Activated CD4-positive, alpha-beta memory T cell treated with anti-CD3 and anti-CD28 coated beads for 36 hours (primary cell): ENCODE measurements at regions of chr6 and their contacts with region 1.

Region 1: DNA sequence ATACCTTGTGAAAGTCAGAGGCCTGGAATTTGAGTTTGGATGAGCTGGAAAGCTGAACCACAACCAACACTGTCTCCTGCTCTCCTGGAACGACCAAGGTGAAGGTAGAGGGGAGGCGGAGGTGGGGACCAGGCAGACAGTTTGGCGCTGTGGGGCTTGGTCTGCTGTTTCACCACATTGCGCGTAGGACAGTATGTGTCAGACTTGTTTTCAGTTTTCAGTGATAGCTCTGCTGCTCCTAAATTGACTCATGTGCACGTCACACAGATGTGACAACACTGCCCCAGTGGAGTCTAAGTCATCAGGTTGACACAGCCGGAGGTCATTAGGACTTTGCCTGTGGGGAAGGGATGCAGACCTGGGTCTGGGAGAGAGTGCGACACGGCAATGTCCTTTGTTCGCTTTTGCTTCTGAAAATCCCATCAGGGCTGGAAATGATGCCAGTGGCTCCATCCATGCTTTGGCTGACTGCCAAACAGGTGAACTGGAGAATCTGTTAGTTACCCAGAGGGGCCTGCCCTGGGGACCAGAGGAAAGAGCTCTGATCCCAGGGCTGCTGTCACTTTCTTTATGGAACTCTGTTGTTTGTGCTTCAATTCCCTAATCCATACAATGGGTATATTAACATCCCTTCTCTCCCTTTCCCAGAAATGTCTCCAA is 255.5 kb downstream of the CDC5L start:
- DNase-seq: peak; percentile 88
- H3K4me3 Mint-ChIP-seq: peak overlapping the region; percentile 33
- H3K27ac Mint-ChIP-seq: peak overlapping the region; percentile 96
- H3K4me1 Mint-ChIP-seq: peaks cover 39% of the 10 kb centered on the region
- H3K27me3 Mint-ChIP-seq: no peaks in the 10 kb centered on the region

Region 2: DNA sequence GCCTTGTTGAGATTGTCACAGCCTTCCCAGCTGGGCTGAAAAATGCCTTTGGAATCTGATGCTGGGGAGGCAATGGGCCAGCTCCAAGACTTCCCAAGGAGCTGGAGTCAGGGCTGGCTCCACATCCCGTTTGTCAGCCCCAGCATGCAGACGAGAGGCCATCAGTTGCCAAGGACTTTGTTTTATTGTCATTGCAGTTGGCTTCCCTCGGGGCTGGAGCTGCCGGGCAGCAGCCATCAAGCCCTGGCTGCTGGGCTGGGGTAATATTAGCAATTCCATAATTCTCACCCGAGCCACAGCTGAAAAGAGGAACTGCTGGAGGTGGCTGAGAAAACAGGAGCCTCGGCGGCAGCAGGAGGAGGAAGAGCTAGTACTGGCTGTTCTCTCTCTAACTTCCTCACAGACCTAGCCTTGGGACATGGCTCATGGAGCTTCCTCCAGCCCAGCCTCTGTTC is 73.0 kb before region 1 on chr6:
- CTCF ChIA-PET with region 1: no interaction called
- POLR2A ChIA-PET with region 1: no interaction called
- intact Hi-C with region 1: no loop called
- DNase-seq: no peak
- H3K4me3 Mint-ChIP-seq: no peak overlapping the region
- H3K27ac Mint-ChIP-seq: no peak overlapping the region
- H3K4me1 Mint-ChIP-seq: no peaks in the 10 kb centered on the region
- H3K27me3 Mint-ChIP-seq: no peaks in the 10 kb centered on the region

Region 3: GRCh38 chr6:44630125-44631028 is 12.6 kb before region 1 on chr6:
- CTCF ChIA-PET with region 1: interaction called, 13 read pairs
- POLR2A ChIA-PET with region 1: no interaction called
- intact Hi-C with region 1: no loop called
- DNase-seq: peak; percentile 66
- H3K4me3 Mint-ChIP-seq: no peak overlapping the region
- H3K27ac Mint-ChIP-seq: no peak overlapping the region
- H3K4me1 Mint-ChIP-seq: peaks cover 15% of the 10 kb centered on the region
- H3K27me3 Mint-ChIP-seq: no peaks in the 10 kb centered on the region

Region 4: DNA sequence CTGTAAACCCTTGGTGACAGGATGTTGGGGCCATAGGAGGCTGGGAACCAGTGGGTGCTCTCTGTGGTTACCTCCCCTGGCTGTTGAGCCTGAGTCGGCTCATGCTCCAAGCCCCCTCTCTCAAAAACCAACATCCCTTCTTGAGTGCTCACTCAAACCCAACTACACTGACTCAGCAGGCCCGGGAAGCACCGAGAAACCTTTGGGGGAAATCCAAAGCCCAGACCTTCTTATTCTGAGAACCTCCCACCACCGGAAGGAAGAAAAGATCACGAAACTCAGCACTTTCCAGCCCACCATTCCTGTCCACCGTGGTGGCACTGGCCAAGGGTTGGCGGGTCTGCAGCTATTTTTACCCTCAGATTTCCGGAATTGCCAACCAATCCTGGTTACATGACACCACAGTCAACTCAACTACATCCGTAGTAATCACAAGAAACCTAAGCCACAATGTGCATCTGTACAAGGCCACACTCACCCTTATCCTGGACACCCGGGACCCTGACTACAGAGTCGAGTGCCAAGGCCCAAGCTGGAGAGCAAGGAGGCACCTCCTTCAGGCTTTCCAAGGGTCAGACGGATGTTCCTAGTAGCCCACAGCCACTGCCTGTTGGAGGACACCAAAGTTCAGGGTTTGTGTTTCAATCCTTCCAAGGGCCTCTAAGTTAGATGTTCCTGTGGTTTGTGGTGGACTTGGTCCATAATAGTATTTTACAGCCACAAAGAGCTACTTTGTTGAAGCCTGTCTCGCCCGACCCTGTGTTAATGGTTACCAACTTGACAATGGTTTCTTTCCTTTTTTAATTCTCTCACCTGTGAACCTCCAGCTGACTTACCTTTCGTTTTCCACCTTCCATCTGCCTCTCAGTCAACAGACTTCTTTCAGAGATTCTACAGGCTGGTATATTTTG is 61.5 kb after region 1 on chr6:
- CTCF ChIA-PET with region 1: no interaction called
- POLR2A ChIA-PET with region 1: no interaction called
- intact Hi-C with region 1: loop called (anchors 1 kb)
- DNase-seq: peak; percentile 82
- H3K4me3 Mint-ChIP-seq: no peak overlapping the region
- H3K27ac Mint-ChIP-seq: peak overlapping the region; percentile 87
- H3K4me1 Mint-ChIP-seq: peaks cover 39% of the 10 kb centered on the region
- H3K27me3 Mint-ChIP-seq: no peaks in the 10 kb centered on the region

Region 5: GRCh38 chr6:44762496-44762895 is 119.5 kb after region 1 on chr6:
- CTCF ChIA-PET with region 1: no interaction called
- POLR2A ChIA-PET with region 1: no interaction called
- intact Hi-C with region 1: no loop called
- DNase-seq: no peak
- H3K4me3 Mint-ChIP-seq: no peak overlapping the region
- H3K27ac Mint-ChIP-seq: no peak overlapping the region
- H3K4me1 Mint-ChIP-seq: no peaks in the 10 kb centered on the region
- H3K27me3 Mint-ChIP-seq: no peaks in the 10 kb centered on the region

Region 6: DNA sequence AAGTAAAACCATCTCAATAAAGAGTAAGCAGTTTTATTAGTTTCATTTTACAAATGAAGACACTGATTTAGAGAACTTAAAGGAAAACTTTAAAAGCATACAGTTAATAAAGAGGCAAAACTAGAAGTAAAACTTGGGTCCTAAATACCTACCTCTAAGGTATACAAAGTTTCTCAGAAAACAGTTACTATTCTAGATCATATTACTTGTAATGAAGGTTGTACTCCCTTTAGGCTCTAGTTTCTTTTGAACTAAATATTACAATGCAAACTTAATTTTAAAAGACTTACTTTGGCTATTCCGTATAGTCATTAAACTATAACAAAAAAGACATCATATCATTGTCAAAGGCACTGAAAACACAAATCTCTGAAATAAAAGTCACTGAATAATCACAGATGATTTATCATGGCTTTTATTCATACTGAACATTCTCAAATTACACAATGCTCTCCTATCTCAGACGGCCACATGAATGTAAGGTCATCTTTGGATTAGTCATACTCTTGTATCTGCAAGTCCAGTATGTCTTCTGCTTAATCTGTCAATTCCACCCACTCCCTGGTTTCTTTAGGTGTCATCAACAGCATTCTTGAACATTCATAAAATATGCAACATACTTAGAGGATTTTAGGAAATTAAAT is 323.6 kb after region 1 on chr6:
- CTCF ChIA-PET with region 1: no interaction called
- POLR2A ChIA-PET with region 1: no interaction called
- intact Hi-C with region 1: no loop called
- DNase-seq: no peak
- H3K4me3 Mint-ChIP-seq: no peak overlapping the region
- H3K27ac Mint-ChIP-seq: no peak overlapping the region
- H3K4me1 Mint-ChIP-seq: peaks cover 19% of the 10 kb centered on the region
- H3K27me3 Mint-ChIP-seq: no peaks in the 10 kb centered on the region

Region 7: DNA sequence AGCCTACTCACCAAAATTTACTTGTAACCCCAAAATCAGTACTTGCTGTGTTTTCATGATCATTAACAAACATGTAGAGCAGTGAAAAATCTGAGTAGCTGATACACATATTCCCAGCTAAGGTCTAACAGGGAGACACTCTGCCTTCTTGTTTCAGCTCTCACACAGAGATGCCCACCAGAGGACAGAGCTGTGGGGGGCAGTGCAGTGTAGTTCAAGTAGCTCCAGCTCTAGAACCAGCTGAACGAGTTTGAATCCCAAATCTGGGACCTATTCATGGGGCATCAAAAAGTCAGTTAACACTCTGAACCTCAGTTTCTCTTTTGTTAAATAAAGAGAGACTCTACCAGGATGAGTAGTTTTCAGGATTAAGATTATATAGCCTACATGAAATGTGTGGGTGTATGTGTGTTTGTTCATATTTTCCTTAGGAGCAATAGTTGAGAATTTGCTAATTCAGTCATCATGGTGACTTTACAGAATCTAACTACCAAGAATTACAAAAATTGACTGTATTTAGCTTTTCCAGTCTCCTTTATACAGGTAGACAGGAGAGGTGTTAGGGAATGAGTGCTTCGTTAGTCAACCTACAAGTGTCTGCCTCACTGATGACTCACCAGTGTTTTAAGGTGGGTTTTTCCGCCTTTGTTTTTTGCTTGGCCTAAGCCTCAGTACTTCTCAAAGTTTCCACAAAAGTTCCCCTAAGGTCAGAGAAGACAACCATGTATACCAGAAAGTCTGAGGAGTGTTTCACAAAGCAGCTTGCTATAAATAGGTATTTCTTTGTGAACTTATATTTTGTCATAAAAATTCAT is 521.2 kb after region 1 on chr6:
- CTCF ChIA-PET with region 1: no interaction called
- POLR2A ChIA-PET with region 1: no interaction called
- intact Hi-C with region 1: loop called (anchors 5 kb)
- DNase-seq: peak; percentile 60
- H3K4me3 Mint-ChIP-seq: peak overlapping the region; percentile 46
- H3K27ac Mint-ChIP-seq: peak overlapping the region; percentile 74
- H3K4me1 Mint-ChIP-seq: peaks cover 42% of the 10 kb centered on the region
- H3K27me3 Mint-ChIP-seq: no peaks in the 10 kb centered on the region

Region 8: DNA sequence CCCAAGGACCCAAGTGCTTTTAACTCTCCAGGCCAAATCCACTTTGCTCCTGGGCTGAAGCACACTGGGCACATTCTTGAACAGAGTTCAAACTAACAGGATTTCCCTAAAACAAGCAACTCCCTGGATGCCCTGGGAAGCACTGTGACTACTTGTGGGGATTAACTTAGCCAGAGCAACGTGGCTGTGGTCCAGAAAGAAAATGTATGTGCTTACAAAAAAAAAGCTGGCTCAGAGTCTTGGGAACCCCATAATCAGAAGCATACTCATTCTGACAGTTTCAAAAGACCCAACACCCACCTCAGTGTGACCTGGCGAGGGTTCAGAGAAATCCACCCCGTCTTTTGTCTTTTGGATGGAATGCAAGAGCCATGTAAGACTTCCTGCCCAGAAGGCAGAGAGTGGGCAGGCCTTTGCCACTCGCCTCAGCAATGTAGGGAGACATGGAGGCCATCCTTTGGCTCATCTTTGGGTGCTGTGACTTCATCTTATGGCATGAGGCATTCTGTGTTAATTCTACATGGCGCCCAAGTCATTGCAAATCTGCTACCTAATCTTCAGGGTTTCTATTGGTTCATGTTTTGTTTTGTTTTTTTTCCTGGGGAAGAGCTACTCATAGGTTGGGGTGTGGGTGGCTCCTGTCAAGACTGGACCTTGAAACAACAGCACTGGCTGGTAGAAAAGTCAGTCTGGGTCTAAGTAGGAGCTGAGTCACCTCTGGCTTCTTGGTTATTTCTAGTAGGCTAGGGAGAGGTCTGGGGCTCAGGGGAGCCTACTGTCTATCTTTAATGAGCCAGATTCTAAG is 983.3 kb after region 1 on chr6:
- CTCF ChIA-PET with region 1: no interaction called
- POLR2A ChIA-PET with region 1: no interaction called
- intact Hi-C with region 1: loop called (anchors 5 kb)
- DNase-seq: peak; percentile 65
- H3K4me3 Mint-ChIP-seq: no peak overlapping the region
- H3K27ac Mint-ChIP-seq: peak overlapping the region; percentile 80
- H3K4me1 Mint-ChIP-seq: peaks cover 48% of the 10 kb centered on the region
- H3K27me3 Mint-ChIP-seq: no peaks in the 10 kb centered on the region